Endothelial cell of umbilical vein (primary cell): ENCODE measurements at regions of chr1 and their contacts with region 1.

Region 1: GRCh38 chr1:25796811-25797458 is 3.1 kb upstream of the SELENON start:
- DNase-seq: peak; percentile 73
- H3K4me3 ChIP-seq: no peak overlapping the region
- H3K27ac ChIP-seq: no peak overlapping the region
- H3K4me1 ChIP-seq: peaks cover 10% of the 10 kb centered on the region
- H3K27me3 ChIP-seq: peaks cover 0 to 1% of the 10 kb centered on the region in 2 experiments
- CTCF ChIP-seq: peak; percentile 74 to 86
- POLR2A ChIP-seq: no peak

Region 2: DNA sequence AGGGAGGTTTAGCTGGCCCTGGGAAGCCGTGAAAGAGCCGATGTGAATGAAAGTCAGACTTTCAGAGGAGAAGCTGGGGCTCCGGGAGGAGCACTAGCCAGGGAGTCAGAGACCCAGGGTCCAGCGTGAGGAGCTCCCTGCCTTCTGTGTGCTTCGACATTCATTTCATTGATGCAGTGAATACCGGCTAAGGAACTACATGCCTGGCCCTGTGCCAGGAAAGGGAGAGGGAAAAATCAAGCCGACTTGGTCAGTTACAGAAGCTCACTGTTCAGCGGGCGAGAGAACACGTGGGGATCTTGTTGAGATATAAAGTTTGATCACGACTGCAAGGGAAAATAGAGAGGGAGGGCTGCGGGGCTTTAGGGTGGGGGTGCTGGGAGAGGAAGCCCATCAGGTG is 790.2 kb before region 1 on chr1:
- CTCF ChIA-PET with region 1: no interaction called
- POLR2A ChIA-PET with region 1: no interaction called
- dilution Hi-C with region 1: no loop called
- intact Hi-C with region 1: no loop called
- DNase-seq: no peak
- H3K4me3 ChIP-seq: no peak overlapping the region
- H3K27ac ChIP-seq: no peak overlapping the region
- H3K4me1 ChIP-seq: no peaks in the 10 kb centered on the region
- H3K27me3 ChIP-seq: peaks cover 11 to 23% of the 10 kb centered on the region in 2 experiments
- CTCF ChIP-seq: no peak
- POLR2A ChIP-seq: no peak

Region 3: DNA sequence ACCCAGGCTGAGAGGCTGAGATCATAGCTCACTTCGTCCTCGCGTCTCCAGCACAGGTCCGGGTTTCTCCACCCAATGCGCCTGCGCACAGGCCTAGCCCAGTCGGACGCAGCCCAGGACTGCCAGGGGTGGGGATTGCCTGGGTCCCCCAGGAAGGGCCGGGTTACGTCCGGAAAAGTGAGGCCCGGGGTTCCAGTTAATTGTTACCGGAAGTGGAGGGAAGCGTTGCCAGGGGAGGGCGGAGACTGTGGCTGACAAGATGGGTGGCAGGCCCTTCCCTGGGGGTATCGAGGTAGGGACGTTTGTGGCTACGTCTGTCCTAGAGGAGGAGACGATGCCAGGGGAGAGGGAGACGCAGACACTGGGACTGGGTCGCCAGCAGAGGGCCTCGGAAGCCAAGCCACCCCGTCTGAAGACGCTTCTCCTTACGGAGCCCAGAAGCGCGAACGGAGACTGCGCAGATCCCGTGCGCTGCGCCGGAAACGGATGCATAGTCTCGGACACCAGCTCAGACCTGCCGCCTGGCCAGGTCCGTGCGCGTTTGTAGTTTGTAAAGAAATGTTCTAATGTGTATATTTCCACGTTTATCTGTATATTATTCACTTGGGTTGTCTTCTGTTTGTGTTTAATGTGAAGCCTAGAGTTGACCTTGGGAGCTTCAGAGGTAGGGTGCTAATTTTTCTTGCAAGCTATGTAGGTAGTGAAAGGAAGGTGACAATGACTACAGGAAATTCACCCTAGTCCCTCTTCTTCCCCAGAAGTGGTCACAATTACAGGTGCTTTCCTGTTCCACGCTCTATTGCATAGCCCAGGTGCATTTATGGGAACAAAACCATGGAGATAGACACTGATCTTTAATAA is 557.0 kb before region 1 on chr1:
- CTCF ChIA-PET with region 1: no interaction called
- POLR2A ChIA-PET with region 1: no interaction called
- dilution Hi-C with region 1: no loop called
- intact Hi-C with region 1: loop called (anchors 10 kb)
- DNase-seq: peak; percentile 91
- H3K4me3 ChIP-seq: peak overlapping the region; percentile 5 to 43 (median 29)
- H3K27ac ChIP-seq: peak overlapping the region; percentile 36
- H3K4me1 ChIP-seq: peaks cover 19% of the 10 kb centered on the region
- H3K27me3 ChIP-seq: no peaks in the 10 kb centered on the region
- CTCF ChIP-seq: peak; percentile 62 to 76
- POLR2A ChIP-seq: peak; percentile 89

Region 4: DNA sequence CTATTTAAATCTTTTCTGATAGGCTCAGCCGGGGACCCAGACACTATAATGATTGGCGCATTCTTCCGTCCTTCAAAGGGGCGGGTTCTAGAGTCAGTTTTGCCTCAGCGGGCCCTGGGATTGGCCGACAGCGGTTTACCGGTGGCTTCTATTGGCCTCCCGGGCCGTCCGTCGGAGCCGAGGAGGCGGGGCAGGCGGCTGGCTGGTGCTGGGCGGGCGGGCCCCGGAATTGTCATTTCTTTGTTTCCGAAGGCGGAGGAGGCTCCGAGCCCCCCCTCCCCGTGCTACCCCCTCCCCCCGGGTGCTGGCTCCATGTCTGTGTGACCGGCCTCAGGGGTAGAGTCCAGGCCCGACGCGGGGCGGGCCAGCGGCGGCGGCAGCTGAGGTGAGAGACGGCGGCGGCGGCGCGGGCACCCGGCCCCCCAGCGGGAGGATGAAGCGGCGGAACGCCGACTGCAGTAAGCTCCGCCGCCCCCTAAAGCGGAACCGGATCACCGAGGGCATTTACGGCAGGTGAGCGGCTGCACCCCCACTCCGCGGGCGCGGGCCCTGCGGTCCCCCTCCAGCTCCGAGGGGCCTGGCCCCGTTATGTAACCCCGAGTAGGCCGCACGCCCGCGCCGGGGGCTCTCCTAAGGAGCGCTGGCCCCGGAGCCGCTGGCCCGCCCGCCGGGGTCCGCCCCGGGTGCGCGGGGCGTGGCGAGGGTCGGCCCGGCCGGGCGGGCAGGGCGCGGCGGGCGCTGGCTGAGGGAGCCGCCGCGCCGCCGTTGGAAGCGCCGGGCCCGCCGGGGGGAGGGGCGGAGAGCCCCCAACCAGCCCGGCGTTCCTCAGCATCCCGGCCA is 366.0 kb before region 1 on chr1 and contains the start of gene MACO1:
- CTCF ChIA-PET with region 1: interaction called, 3 read pairs
- POLR2A ChIA-PET with region 1: no interaction called
- dilution Hi-C with region 1: no loop called
- intact Hi-C with region 1: loop called (anchors 10 kb)
- DNase-seq: peak; percentile 97
- H3K4me3 ChIP-seq: peak within 1 kb of the TSS; percentile 86 to 97 (median 95)
- H3K27ac ChIP-seq: peak within 1 kb of the TSS; percentile 74
- H3K4me1 ChIP-seq: peaks cover 39% of the 10 kb centered on the region
- H3K27me3 ChIP-seq: no peaks in the 10 kb centered on the region
- CTCF ChIP-seq: no peak
- POLR2A ChIP-seq: no peak
- total RNA-seq, gene MACO1: 24.4 and 25.5 TPM in 2 replicates

Region 5: GRCh38 chr1:25543425-25544242 is 253.3 kb before region 1 on chr1 and contains the start of gene LDLRAP1:
- CTCF ChIA-PET with region 1: no interaction called
- POLR2A ChIA-PET with region 1: interaction called, 4 read pairs
- dilution Hi-C with region 1: no loop called
- intact Hi-C with region 1: loop called (anchors 5 kb)
- DNase-seq: peak; percentile 74
- H3K4me3 ChIP-seq: peak within 1 kb of the TSS; percentile 65 to 80 (median 75)
- H3K27ac ChIP-seq: peak within 1 kb of the TSS; percentile 23
- H3K4me1 ChIP-seq: peaks cover 7% of the 10 kb centered on the region
- H3K27me3 ChIP-seq: no peaks in the 10 kb centered on the region
- CTCF ChIP-seq: no peak
- POLR2A ChIP-seq: peak; percentile 72
- total RNA-seq, gene LDLRAP1: 20.8 and 24.7 TPM in 2 replicates

Region 6: DNA sequence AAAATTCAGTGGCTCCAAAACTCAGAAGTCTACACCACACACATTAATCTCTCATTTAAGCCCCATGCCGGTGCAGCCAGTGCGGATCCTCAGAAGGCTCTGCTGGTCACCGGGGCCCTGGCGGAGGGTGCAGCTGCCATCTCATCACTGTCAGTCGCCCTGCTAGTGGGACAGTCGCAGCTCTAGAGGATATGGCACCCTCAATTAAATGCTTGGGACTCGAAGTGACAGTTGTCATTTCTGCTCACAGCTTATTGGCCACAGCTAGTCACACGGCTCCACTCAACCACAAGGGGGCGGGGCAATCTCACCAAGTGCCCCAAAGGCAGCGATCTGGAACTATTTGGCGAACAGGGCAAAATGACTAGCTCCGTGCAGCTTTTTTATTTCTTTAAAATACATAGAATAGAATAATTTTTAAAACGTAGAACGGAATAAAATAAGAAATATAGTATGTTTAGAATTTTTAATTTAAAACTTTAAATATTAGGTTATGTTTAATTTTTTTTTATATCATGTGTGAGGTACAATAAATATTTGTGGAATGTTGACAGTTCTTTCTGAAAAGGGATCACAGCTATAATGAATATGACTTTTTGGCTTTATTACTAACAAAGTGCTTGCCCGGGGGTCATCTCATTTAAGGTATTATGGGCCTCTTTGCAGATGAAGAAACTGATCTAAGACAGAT is 188.3 kb before region 1 on chr1:
- CTCF ChIA-PET with region 1: interaction called, 80 read pairs
- POLR2A ChIA-PET with region 1: no interaction called
- dilution Hi-C with region 1: no loop called
- intact Hi-C with region 1: loop called (anchors 1 kb)
- DNase-seq: peak; percentile 64
- H3K4me3 ChIP-seq: no peak overlapping the region
- H3K27ac ChIP-seq: no peak overlapping the region
- H3K4me1 ChIP-seq: no peaks in the 10 kb centered on the region
- H3K27me3 ChIP-seq: peaks cover 26 to 37% of the 10 kb centered on the region in 2 experiments
- CTCF ChIP-seq: peak; percentile 48 to 72
- POLR2A ChIP-seq: no peak

Region 7: DNA sequence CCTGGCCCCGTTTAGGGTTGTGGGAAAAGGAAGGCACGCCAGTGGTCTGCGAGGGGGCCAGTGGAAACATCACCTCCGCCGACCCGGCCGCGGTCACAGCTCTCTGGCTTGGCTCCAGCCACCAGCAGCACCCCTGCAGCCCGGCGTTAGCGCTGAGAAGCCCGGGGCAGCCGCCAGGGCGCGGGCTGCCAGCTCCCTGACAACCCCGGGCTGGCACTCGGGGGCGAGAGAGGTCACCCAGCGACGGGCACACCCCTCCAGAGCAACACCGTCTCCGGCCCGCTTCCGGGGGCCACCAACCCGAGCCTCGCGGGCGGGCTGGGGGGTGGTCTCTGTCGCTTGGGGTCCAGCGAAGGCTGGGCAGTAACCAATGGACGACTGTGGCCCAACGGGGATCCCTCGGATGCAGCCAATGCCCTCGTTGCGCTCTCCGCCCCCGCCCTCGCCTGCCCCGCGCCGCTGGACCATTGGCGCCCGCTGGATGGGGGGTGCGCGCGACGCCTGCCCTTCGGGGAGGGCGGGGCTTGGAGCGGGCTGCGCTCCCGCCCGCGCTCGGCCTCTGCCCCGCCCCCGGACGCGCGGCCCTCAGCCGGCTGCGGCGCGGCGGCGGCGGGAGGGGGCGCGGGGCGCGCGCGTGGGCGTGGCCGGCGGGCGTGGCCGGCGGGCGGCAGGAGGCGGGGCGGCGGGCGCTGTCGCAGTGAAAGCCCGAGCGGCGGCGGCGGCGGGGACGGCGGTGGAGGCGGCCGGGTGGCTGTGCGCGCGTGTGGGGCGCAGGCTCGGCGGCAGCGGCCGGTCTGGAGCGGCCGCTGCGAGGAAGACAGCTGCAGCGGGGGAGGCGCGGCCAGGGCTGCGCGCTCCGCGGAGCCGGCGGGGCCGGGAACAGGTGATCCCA is 180.6 kb before region 1 on chr1 and contains the start of gene MAN1C1:
- CTCF ChIA-PET with region 1: interaction called, 4 read pairs
- POLR2A ChIA-PET with region 1: no interaction called
- dilution Hi-C with region 1: no loop called
- intact Hi-C with region 1: loop called (anchors 1 kb)
- DNase-seq: peak; percentile 80
- H3K4me3 ChIP-seq: peak within 1 kb of the TSS; percentile 37 to 57 (median 39)
- H3K27ac ChIP-seq: no peak within 1 kb of the TSS
- H3K4me1 ChIP-seq: peaks cover 7% of the 10 kb centered on the region
- H3K27me3 ChIP-seq: peaks cover 53 to 56% of the 10 kb centered on the region in 2 experiments
- CTCF ChIP-seq: peak; percentile 26 to 65
- POLR2A ChIP-seq: no peak
- total RNA-seq, gene MAN1C1: 0.85 and 4.0 TPM in 2 replicates

Region 8: DNA sequence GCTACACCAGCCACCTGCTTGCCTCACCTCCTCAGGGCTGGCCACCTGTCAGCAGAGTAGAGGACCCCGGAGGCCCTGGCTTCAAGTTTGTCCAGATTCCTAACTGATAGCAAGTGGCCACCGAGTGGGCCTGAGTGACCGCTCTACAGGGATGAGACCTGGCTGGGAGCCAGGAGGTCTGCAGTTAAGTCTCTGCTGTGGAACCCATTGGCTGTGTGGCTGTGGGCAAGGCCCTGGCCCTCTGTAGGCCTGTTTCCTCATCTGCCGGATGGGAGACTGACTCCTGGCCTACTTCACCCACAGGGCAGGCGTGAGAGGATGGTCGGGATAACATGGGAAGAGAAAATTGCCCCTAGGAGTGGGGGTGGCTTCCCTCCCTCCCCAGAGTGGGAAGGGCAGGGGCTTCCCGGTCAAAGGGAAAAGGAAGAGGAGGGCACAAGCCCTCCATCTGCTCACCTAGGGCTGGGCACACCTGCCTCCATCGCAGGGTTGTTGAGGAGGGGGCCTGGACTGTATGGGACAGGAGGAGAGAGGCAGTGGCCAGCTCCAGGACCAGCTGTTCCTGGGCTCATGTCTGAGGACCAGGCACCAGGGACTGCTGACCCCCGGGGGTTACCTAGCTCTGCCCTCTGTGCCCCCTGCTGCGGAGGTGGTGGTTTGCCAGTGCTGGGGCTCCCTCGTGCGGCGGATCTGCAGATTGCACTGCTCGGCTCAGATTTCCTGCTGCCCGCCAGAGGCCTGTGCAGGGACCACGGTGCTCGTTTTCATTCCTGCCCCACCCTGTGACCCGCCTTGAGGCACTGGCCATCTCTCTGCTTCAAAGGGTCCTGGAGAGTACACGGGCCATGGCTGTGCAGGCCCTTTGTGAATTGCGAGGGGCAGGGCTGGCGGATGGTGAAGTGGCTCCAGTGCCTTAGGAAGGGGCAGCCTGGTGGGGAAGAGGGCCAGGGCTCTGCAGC is 13.7 kb after region 1 on chr1:
- CTCF ChIA-PET with region 1: interaction called, 15 read pairs
- POLR2A ChIA-PET with region 1: no interaction called
- dilution Hi-C with region 1: no loop called
- intact Hi-C with region 1: no loop called
- DNase-seq: peak; percentile 44
- H3K4me3 ChIP-seq: no peak overlapping the region
- H3K27ac ChIP-seq: no peak overlapping the region
- H3K4me1 ChIP-seq: peaks cover 10% of the 10 kb centered on the region
- H3K27me3 ChIP-seq: no peaks in the 10 kb centered on the region
- CTCF ChIP-seq: peak; percentile 78 to 95
- POLR2A ChIP-seq: no peak